ENCODE measurements at regions of chr18 and their contacts with region 1.

Region 1: DNA sequence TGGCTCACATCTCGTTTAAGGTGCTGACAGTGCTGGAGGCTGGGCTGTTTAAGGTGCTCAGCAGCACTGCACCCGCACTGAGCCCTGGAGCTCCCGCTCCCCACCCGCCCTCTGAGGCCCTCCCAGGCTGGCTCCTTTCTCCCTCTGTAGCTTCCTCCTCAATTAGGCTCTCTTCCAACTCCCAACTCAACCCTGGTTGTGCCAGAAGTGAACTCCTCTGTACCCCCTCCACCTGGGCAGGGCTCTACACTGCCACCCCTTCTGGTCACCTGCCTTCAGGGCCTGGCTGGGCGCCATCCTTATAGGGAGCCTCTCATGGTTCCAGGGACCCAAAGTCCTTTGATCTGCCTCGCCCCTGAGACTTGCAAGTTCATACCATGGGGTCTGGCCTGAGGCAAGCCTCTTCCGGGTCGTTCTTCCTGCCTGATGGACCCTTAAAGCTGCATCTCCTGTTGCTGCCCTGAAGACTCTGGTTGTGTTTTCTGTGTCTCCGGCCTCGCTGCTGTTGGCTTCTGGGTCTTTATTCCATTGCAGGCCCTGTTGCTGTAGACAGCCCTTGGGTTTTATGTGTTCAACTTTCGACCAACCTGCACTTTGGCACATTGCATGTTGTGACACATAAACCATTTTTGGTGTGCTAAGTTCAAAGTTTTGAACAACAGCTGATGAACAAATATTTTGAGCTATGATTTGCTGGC is 199.6 kb downstream of the LDLRAD4 start:
- DNase-seq: no peak
- CTCF ChIP-seq: no peak

Region 2: DNA sequence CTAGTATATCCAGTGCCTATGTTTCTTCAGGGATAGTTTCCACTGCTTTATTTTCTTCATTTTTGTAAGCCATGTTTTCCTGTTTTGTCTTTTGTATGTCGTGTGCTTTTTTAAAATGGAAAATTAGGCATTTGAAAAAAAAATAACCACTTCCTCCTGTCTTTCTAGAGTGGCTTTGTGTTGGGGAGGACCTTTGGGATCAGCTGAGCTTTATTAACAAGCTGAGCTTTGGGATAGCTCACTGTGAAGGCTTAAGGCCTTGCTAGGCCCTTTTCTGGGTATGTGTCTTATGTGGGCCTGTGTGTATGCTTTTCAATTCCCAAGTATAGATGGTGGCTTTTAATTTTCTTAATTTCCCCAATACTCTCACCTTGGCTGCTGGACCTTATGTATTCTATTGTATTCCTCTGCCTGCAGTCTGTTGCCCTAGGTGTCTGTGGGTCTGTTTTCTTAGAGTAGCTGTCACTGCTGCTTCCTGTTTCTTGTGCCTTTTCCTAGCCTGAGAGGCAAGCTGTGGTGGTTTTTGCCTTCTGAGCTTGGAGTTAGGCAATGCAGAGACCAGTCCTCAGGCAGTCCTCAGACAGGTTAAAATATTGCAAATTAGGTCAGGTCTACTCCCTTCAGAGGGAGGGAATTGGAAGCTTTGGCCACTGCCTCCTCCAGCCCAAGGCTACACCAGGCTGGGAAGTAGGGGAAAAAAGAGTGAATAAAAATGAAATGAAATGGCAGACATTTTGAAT is 64.9 kb before region 1 on chr18:
- CTCF ChIA-PET with region 1: no interaction called
- POLR2A ChIA-PET with region 1: no interaction called
- DNase-seq: no peak
- CTCF ChIP-seq: no peak

Region 3: DNA sequence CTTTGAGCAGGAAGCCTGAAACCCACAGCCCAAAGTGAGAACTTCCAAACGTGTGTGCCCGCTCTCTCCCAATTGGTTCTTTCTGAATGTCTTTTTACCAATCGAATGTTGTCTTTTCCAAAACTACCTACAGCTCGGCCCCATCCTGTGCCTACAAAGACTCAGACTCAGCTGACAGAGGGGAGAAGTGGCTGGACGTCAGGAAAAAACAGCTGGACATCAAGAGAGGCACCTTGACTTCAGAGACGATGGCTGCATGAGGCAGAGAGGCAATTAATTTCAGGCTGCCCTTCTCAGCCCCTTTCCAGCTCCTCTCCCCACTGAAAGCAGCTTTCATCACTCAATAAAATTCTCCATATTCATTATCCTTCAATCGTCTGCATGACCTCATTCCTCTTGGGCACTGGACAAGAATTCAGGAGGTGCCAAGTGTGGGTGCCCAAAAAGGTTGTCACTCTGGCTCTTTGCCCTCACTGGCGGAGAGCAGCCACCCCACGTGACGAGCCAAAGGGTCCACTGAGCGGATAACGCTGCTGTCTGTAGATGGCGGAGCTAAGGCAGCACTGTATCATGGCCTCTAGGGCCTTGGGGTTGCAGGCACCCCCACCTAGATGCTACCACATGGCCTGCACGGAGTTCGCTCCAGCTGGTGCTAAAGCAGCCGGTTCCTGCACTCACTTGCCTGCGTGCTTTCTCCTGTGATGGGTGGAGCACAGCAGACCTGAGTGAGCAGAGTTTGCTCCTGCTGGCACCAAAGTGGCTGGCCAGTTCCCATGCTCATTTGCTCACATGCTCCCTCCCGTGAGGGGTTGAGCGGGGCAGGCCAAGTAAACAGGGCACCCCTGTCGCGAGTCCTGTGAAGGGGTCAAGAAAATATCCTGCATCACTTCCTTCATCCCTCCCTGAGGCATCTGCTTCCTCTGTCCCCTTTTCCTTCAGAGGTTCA is 270.3 kb after region 1 on chr18:
- CTCF ChIA-PET with region 1: no interaction called
- POLR2A ChIA-PET with region 1: interaction called, 13 read pairs
- DNase-seq: no peak
- CTCF ChIP-seq: no peak